ENCODE measurements at regions of chr3 and their contacts with region 1.

Region 1: DNA sequence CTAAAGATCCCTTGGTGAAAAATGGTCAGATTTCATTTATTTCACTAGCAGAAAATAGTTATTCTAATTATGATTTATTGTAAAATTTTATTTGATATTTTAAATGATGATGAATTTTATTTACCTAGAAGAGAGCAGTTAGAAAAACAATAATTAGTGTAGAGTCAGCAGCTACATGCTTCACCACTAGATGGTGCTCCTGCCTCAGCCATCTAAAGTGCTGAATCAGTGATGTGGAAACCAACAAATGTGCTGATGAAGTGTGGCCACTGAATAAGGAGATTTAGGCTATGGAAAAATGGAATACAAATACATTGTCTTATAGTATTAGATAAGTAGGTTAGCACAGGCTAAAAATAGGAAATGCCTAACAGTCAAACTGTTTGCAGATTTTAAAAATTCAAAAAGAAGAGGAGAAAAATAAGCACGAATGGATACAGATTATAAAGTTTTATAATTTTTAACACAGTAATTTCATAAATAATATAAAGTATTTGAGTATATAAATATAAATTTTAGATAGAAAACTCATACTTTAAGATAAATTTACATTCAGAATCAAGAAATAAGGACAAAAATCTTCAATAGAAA is 109.8 kb downstream of the PPP2R3A start:
- DNase-seq: peak; percentile 38 to 73 (median 65)
- ATAC-seq: peak; percentile 88
- H3K4me3 ChIP-seq: no peak overlapping the region
- H3K4me3 Mint-ChIP-seq: no peak overlapping the region
- H3K27ac ChIP-seq: no peak overlapping the region
- H3K27ac Mint-ChIP-seq: peak overlapping the region in 1 of 9 donors; percentile 28
- H3K4me1 ChIP-seq: no peaks in the 10 kb centered on the region
- H3K4me1 Mint-ChIP-seq: peaks cover 0 to 5% (median 4%) of the 10 kb centered on the region in 7 donors
- H3K27me3 ChIP-seq: no peaks in the 10 kb centered on the region
- H3K27me3 Mint-ChIP-seq: peaks cover 0 to 6% (median 0%) of the 10 kb centered on the region in 5 donors

Region 2: GRCh38 chr3:136250226-136250902 is 175.1 kb after region 1 on chr3 and contains the start of gene PCCB:
- CTCF ChIA-PET with region 1: no interaction called
- POLR2A ChIA-PET with region 1: no interaction called
- intact Hi-C with region 1: loop called (anchors 1 kb)
- DNase-seq: peak; percentile 86 to 95 (median 93)
- ATAC-seq: peak; percentile 99
- H3K4me3 ChIP-seq: peak within 1 kb of the TSS; percentile 80
- H3K4me3 Mint-ChIP-seq: peak within 1 kb of the TSS; percentile 79 to 94 (median 90)
- H3K27ac ChIP-seq: peak within 1 kb of the TSS; percentile 80
- H3K27ac Mint-ChIP-seq: peak within 1 kb of the TSS; percentile 91 to 96 (median 93)
- H3K4me1 ChIP-seq: peaks cover 9% of the 10 kb centered on the region in 2 donors
- H3K4me1 Mint-ChIP-seq: peaks cover 12 to 30% (median 21%) of the 10 kb centered on the region in 7 donors
- H3K27me3 ChIP-seq: no peaks in the 10 kb centered on the region
- H3K27me3 Mint-ChIP-seq: no peaks in the 10 kb centered on the region
- total RNA-seq, gene PCCB: 13.6 to 22.6 (median 16.6) TPM

Region 3: DNA sequence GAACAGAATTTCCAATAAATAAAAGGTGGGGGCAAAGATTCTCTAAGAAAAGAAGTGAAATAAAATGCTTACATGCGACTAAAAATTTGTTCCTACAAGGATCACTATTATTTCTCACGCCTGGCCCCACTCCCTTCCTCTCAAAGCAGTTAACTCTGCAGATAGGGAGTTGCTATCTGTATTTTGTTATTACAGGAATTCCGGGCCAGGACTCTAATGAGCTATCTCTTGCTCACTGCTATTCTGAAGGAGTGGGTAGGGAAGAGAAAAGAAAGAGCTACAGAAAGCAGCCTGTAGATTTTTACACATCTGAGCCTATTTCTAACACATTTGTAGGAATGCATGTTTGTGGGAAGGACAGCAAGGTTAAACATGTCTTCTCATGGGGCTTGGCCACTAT is 315.3 kb after region 1 on chr3:
- CTCF ChIA-PET with region 1: interaction called, 10 read pairs
- POLR2A ChIA-PET with region 1: no interaction called
- intact Hi-C with region 1: loop called (anchors 1 kb)
- DNase-seq: no peak
- ATAC-seq: no peak
- H3K4me3 ChIP-seq: no peak overlapping the region
- H3K4me3 Mint-ChIP-seq: no peak overlapping the region
- H3K27ac ChIP-seq: no peak overlapping the region
- H3K27ac Mint-ChIP-seq: no peak overlapping the region
- H3K4me1 ChIP-seq: no peaks in the 10 kb centered on the region
- H3K4me1 Mint-ChIP-seq: peaks cover 0 to 3% (median 0%) of the 10 kb centered on the region in 7 donors
- H3K27me3 ChIP-seq: no peaks in the 10 kb centered on the region
- H3K27me3 Mint-ChIP-seq: no peaks in the 10 kb centered on the region

Region 4: DNA sequence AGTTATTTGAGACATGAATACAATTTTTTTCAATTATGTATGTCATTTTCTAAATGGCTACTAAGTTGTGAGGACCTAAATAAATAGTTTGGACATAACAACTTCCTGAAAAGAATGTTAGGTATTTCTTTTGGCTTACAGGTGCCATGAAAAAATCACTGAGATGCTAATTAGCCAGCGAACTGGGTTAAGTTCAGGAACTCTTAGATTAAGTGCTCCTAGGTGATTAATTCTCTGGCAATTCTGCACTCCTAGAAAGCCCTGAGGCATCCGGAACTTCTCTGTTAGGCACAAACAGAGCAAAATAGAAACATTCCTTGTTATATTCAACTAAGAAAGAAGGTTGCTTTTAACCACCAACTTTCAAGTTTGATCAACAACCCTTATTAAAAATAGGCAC is 484.6 kb after region 1 on chr3:
- CTCF ChIA-PET with region 1: no interaction called
- POLR2A ChIA-PET with region 1: no interaction called
- intact Hi-C with region 1: loop called in 1 of 2 experiments (anchors 5 kb)
- DNase-seq: no peak
- ATAC-seq: no peak
- H3K4me3 ChIP-seq: no peak overlapping the region
- H3K4me3 Mint-ChIP-seq: no peak overlapping the region
- H3K27ac ChIP-seq: no peak overlapping the region
- H3K27ac Mint-ChIP-seq: no peak overlapping the region
- H3K4me1 ChIP-seq: no peaks in the 10 kb centered on the region
- H3K4me1 Mint-ChIP-seq: peaks cover 0 to 35% (median 5%) of the 10 kb centered on the region in 7 donors
- H3K27me3 ChIP-seq: no peaks in the 10 kb centered on the region
- H3K27me3 Mint-ChIP-seq: no peaks in the 10 kb centered on the region

Region 5: DNA sequence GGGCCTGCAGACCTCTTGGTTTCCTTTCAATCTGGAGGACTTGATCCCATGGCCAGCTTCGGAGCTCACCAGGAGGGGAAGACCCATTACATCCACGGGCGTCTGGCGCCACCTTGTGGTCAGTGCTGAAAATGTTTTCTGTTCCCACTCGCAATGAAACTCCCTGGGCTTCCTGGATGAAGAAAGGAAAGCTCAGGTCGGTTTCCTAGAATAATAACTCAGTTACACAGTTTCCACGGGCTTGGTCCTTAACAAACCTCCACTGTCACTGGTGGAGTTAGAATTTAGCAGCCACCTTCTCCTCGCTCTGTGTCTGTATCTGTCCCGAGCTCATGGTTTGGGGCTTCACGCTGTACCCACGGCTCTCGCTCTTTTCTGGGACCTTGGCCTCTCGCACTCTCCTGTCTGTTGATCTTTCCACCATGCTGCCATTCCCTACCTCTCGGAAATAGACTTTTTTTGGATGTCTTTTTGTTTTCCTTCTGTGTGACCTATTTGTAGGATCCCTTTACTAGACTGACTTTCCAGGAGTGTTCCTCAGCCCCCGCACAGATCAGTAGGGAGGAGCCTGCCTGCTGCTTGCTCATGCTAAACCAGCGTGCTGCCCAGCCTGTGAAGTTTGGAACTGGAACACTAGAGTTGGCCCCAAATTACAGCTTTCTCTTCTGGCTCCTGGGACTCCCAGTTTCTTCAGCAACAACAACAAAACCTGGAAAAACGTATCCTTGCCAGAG is 938.8 kb after region 1 on chr3:
- CTCF ChIA-PET with region 1: interaction called, 30 read pairs
- POLR2A ChIA-PET with region 1: interaction called, 3 read pairs
- intact Hi-C with region 1: loop called (anchors 1 kb)
- DNase-seq: peak; percentile 59 to 87 (median 78)
- ATAC-seq: peak; percentile 93
- H3K4me3 ChIP-seq: peak overlapping the region; percentile 43
- H3K4me3 Mint-ChIP-seq: peak overlapping the region; percentile 65 to 87 (median 80)
- H3K27ac ChIP-seq: no peak overlapping the region
- H3K27ac Mint-ChIP-seq: peak overlapping the region in 4 of 9 donors; percentile 24 to 64 (median 57)
- H3K4me1 ChIP-seq: no peaks in the 10 kb centered on the region
- H3K4me1 Mint-ChIP-seq: peaks cover 5 to 10% (median 9%) of the 10 kb centered on the region in 7 donors
- H3K27me3 ChIP-seq: no peaks in the 10 kb centered on the region
- H3K27me3 Mint-ChIP-seq: peaks cover 0 to 4% (median 0%) of the 10 kb centered on the region in 5 donors

Region 6: GRCh38 chr3:137946345-137946973 is 1871.1 kb after region 1 on chr3:
- CTCF ChIA-PET with region 1: no interaction called
- POLR2A ChIA-PET with region 1: no interaction called
- intact Hi-C with region 1: loop called (anchors 1 to 2 kb)
- DNase-seq: peak in 8 of 9 donors; percentile 12 to 61 (median 52)
- ATAC-seq: peak; percentile 47
- H3K4me3 ChIP-seq: no peak overlapping the region
- H3K4me3 Mint-ChIP-seq: peak overlapping the region in 1 of 10 donors; percentile 40
- H3K27ac ChIP-seq: no peak overlapping the region
- H3K27ac Mint-ChIP-seq: peak overlapping the region in 1 of 9 donors; percentile 28
- H3K4me1 ChIP-seq: no peaks in the 10 kb centered on the region
- H3K4me1 Mint-ChIP-seq: peaks cover 0 to 7% (median 5%) of the 10 kb centered on the region in 7 donors
- H3K27me3 ChIP-seq: no peaks in the 10 kb centered on the region
- H3K27me3 Mint-ChIP-seq: peaks cover 0 to 5% (median 4%) of the 10 kb centered on the region in 5 donors

Measured in naive thymus-derived CD4-positive, alpha-beta T cell (primary cell).